Right ventricle myocardium inferior (tissue), 1 donor: ENCODE measurements at regions of chr13 and their contacts with region 1.

Region 1: GRCh38 chr13:107205303-107206104 is 637.6 kb upstream of the ARGLU1 start:
- DNase-seq: peak; percentile 71
- ATAC-seq: peak; percentile 73

Region 2: GRCh38 chr13:106493533-106494220 is 711.8 kb before region 1 on chr13:
- intact Hi-C with region 1: loop called (anchors 10 kb)
- DNase-seq: no peak
- ATAC-seq: no peak

Region 3: DNA sequence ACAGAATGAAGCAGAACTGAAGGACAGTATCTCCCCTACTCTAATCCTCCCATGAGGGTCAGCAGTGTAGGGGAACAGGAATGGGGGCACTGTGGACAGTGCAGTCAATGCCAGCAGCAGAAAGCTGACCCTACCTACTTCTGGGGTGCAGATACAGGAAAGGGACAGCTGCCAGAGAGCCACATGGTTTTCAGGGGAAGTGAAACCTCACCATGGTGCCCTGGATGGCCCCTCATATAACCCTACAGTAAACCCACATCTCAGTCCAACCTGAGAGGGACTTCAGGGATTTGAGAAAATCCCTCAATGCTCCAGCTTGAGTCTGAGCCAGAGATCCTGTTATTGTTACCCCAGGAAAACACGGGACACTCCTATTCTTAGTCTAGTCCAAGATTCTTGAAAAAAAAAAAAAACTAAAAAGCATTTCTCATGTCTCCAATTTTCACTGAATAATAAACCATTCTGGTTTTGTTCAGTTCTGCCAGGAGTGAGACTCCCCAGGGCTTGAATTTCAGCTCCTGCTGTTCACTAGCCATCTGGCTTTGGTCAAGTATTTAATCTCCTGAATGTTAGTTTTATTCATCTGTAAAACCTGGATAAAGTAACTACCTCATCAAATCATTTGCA is 126.0 kb before region 1 on chr13:
- intact Hi-C with region 1: no loop called
- DNase-seq: no peak
- ATAC-seq: no peak

Region 4: DNA sequence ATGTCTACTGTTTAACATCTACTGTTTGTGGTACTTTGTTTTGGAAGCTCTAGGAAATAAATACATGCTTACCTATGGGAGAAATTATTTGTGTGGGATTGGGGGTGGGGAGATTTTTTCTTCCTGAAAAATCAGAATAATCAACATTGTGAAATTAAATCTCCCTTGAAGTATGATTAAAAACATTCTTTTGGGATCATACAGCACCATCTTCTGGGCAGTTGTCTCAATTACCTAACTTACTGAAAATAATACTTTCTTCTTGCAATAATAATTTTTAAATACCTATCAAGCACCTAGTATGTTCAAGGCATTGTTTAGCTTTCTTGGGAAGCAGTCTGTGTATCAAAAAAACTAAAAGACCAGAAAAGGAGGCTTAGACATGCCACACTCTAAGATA is 61.1 kb before region 1 on chr13:
- intact Hi-C with region 1: loop called (anchors 5 kb)
- DNase-seq: no peak
- ATAC-seq: no peak

Region 5: GRCh38 chr13:107339209-107339608 is 133.7 kb after region 1 on chr13:
- intact Hi-C with region 1: no loop called
- DNase-seq: no peak
- ATAC-seq: no peak

Region 6: DNA sequence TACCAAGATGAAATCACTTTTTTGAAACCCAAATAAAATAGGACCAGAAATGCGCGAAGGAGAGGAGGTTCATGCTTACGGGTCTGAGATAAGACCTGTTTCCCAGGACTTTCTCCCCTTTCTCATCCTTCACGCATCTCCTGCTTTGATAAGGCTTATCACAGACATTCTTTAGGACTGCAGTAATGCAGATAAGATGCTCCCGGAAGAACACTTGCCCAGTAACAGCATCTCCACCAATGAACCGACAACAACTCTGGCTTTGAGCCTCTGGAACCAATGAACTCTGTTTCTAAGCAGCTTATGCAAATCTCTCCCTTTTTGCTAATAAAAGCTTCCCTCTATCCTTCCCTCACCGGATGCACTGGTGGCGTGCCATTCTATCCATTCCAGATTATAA is 145.8 kb after region 1 on chr13:
- intact Hi-C with region 1: no loop called
- DNase-seq: no peak
- ATAC-seq: no peak